WTC11 (cell line): ENCODE measurements at regions of chr17 and their contacts with region 1.

Region 1: GRCh38 chr17:75601057-75602051 is 13.8 kb downstream of the MYO15B start:
- DNase-seq: peak; percentile 94
- ATAC-seq: peak; percentile 96
- H3K4me3 Mint-ChIP-seq: no peak overlapping the region
- H3K27ac Mint-ChIP-seq: no peak overlapping the region
- H3K4me1 Mint-ChIP-seq: no peaks in the 10 kb centered on the region
- H3K27me3 Mint-ChIP-seq: no peaks in the 10 kb centered on the region
- CTCF ChIP-seq: peak; percentile 96

Region 2: DNA sequence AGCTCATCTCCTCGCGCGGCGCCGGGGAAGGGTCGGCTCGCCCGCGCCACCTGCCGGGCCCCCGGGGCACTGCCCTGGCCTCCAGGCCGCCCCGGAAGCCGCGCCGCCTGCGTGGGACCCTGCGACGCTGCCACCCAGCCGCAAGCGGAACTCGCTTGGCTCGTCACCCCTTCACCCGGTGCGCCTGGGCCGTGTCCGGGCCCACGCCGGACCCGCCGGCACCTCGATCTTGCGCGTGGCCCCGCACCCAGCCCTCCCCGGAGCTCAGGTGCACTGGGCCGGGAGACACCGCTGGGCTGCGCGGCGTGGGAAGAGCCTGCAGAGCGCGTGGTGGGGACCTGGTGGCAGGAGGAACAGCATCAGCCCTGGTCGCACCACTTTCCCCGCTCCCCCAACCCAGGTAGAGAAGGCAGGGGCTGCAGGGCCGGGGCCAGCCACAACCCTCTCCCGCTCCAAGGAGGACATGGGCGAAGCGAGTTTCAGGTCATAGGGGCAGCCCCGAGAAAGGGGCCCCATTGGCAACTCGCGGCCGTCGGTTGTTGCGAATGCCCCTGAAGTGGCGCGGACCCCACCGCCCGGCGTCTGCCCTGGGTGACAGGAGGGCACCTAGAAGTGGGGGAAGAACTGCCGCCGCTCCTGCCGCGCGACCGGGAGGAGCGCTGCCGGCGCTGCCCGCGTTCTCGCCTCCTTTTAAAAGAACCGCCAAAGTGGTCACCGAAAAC is 330.0 kb before region 1 on chr17:
- CTCF ChIA-PET with region 1: interaction called, 10 read pairs
- POLR2A ChIA-PET with region 1: no interaction called
- DNase-seq: peak; percentile 78
- ATAC-seq: peak; percentile 31
- H3K4me3 Mint-ChIP-seq: peak overlapping the region; percentile 79
- H3K27ac Mint-ChIP-seq: no peak overlapping the region
- H3K4me1 Mint-ChIP-seq: peaks cover 19% of the 10 kb centered on the region
- H3K27me3 Mint-ChIP-seq: no peaks in the 10 kb centered on the region
- CTCF ChIP-seq: peak; percentile 83

Region 3: GRCh38 chr17:75524953-75525719 is 76.2 kb before region 1 on chr17 and contains the start of gene LLGL2:
- CTCF ChIA-PET with region 1: interaction called, 13 read pairs
- POLR2A ChIA-PET with region 1: no interaction called
- DNase-seq: peak; percentile 87
- ATAC-seq: peak; percentile 89
- H3K4me3 Mint-ChIP-seq: peak within 1 kb of the TSS; percentile 83
- H3K27ac Mint-ChIP-seq: peak within 1 kb of the TSS; percentile 80
- H3K4me1 Mint-ChIP-seq: peaks cover 17% of the 10 kb centered on the region
- H3K27me3 Mint-ChIP-seq: 0 out of 2 replicates have a peak, but pooled peaks cover 3% of the 10 kb centered on the region
- CTCF ChIP-seq: no peak; the same call in 1 of the 2 replicates
- total RNA-seq, gene LLGL2: 94.3 to 103 TPM (median 97.0 TPM) in 3 replicates

Region 4: GRCh38 chr17:75589012-75589918 is 12.1 kb before region 1 on chr17:
- CTCF ChIA-PET with region 1: interaction called, 61 read pairs
- POLR2A ChIA-PET with region 1: interaction called, 3 read pairs
- DNase-seq: peak; percentile 95
- ATAC-seq: peak; percentile 89
- H3K4me3 Mint-ChIP-seq: peak overlapping the region; percentile 49
- H3K27ac Mint-ChIP-seq: no peak overlapping the region
- H3K4me1 Mint-ChIP-seq: peaks cover 5% of the 10 kb centered on the region
- H3K27me3 Mint-ChIP-seq: peaks cover 25% of the 10 kb centered on the region
- CTCF ChIP-seq: peak; percentile 49; the same call in 1 of the 2 replicates

Region 5: DNA sequence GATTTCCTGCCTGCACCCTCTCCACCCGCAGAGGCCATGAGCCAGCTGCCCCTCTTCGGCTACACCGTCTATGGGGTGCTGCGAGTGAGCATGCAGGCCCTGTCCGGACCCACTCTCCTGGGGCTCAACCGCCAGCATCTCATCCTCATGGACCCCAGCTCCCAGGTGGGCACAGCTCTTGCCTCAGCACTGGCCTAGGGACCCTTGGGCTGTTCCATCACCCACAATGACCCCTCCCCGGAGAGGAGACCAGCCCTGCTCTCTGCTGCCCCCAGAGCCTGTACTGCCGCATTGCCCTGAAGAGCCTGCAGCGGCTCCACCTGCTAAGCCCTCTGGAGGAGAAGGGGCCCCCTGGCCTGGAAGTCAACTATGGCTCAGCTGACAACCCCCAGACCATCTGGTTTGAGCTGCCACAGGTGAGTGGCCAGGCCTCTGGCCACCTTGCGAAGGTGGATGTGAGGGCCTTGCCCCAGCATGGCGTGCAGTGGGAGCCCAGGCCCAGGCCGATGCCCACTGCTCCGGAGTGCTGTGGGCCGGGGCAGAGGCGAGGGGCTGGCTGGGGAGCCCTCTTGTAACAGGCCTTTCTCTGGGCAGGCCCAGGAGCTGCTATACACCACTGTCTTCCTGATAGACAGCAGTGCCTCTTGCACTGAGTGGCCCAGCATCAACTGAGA is 24.6 kb after region 1 on chr17:
- CTCF ChIA-PET with region 1: interaction called, 87 read pairs
- POLR2A ChIA-PET with region 1: no interaction called
- DNase-seq: peak; percentile 87
- ATAC-seq: peak; percentile 93
- H3K4me3 Mint-ChIP-seq: no peak overlapping the region
- H3K27ac Mint-ChIP-seq: no peak overlapping the region
- H3K4me1 Mint-ChIP-seq: no peaks in the 10 kb centered on the region
- H3K27me3 Mint-ChIP-seq: no peaks in the 10 kb centered on the region
- CTCF ChIP-seq: peak; percentile 90

Region 6: DNA sequence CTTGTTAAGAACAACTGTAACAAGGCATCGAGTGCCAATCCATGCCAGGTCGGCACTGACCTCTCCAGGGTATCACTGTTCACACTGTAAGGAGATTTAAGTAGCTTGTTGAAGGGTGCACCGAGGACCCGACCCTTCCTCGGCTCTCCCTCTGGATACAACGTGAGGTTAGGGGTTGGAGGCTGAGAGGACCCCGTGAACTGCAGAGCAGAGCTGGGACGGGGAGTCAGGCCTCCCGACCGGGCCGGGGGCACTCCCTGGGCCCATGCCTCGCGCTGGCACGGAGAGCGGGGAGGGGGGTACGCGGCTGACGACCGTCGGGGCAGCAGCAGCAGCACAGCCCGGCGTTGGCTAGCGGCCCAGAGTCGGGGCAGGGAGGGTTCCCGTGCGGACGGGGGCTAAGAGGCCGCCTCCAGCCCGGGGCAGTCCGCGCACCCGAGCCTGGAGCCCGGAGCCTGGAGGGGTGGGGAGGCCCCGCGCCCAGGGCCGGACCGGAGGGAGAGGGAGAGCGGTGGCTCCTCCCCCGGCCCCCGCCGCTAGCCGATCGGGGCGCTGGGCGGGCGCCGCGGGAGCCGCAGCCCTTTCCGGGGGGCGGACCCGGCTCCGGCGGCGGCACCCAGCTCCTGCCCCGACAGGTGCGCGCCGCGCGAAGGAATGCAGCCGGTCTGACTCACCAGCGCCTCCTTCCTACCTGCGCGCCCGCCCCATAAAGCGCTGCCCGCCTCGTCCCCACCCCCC is 119.5 kb after region 1 on chr17 and contains the start of gene ITGB4:
- CTCF ChIA-PET with region 1: interaction called, 13 read pairs
- POLR2A ChIA-PET with region 1: no interaction called
- DNase-seq: peak; percentile 87
- ATAC-seq: peak; percentile 84
- H3K4me3 Mint-ChIP-seq: peak within 1 kb of the TSS; percentile 83
- H3K27ac Mint-ChIP-seq: peak within 1 kb of the TSS; percentile 94
- H3K4me1 Mint-ChIP-seq: peaks cover 7% of the 10 kb centered on the region
- H3K27me3 Mint-ChIP-seq: peaks cover 22% of the 10 kb centered on the region
- CTCF ChIP-seq: no peak
- total RNA-seq, gene ITGB4: 9.5 to 11.2 TPM (median 10.6 TPM) in 3 replicates